ENCODE measurements at regions of chr10 and their contacts with region 1.

Region 1: GRCh38 chr10:14478604-14479003 is 147.9 kb upstream of the FRMD4A start:
- DNase-seq: peak; percentile 62
- H3K4me3 Mint-ChIP-seq: no peak overlapping the region
- H3K27ac Mint-ChIP-seq: no peak overlapping the region
- H3K4me1 Mint-ChIP-seq: no peaks in the 10 kb centered on the region
- H3K27me3 Mint-ChIP-seq: peaks cover 31% of the 10 kb centered on the region

Region 2: DNA sequence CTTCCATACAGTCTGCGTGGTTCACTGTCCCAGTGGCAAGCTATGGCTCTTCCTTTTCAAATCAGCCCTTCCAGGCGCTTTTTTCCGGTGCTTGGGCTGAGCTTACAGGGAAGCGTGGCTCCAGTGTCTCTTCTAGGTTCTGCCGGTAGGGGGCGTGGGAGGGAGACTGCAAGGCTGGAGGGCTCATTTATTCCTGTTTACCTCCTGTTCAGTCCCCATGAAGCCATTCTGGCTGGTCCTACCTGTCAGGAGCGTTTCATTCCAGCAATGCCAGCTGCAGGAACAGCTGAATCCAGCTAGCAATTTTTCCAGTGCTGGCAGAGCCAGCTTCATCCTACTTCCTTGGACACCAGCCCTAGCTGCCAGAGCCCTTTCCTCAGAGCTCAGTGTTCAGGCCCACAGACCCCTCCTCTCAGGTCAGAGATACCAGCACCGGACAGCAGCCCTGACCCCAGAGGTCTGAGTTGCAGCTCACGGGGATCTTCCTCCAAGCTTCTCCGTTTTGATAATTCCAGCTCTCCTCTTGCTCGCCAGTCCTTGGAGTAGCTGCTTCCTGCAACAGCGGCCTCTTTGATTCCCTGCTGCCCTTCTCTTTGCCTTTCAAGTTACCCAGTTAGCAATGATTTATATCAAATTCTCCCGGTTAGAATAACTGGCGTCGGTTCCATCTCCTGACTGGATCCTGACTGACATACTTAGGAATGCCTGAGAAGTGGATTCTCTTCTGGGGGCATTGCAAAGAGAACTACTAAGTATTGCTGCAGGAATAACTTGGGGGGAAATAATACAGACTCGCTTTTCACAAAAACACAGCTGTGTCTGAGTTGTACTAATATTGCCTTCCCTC is 277.7 kb before region 1 on chr10:
- intact Hi-C with region 1: loop called (anchors 1 kb)
- DNase-seq: peak; percentile 58
- H3K4me3 Mint-ChIP-seq: no peak overlapping the region
- H3K27ac Mint-ChIP-seq: no peak overlapping the region
- H3K4me1 Mint-ChIP-seq: no peaks in the 10 kb centered on the region
- H3K27me3 Mint-ChIP-seq: peaks cover 16% of the 10 kb centered on the region

Region 3: GRCh38 chr10:14500172-14500765 is 21.7 kb after region 1 on chr10:
- intact Hi-C with region 1: no loop called
- DNase-seq: no peak
- H3K4me3 Mint-ChIP-seq: no peak overlapping the region
- H3K27ac Mint-ChIP-seq: no peak overlapping the region
- H3K4me1 Mint-ChIP-seq: peaks cover 8% of the 10 kb centered on the region
- H3K27me3 Mint-ChIP-seq: peaks cover 15% of the 10 kb centered on the region